Activated CD4-positive, alpha-beta T cell treated with anti-CD3 and anti-CD28 coated beads, Interleukin-2, amount 10 ng/mL, durations not matched to agents 24 days and 14 days (primary cell): ENCODE measurements at regions of chr18 and their contacts with region 1.

Region 1: GRCh38 chr18:24014062-24014985 is at the start of gene TTC39C:
- DNase-seq: peak; percentile 95
- H3K4me3 Mint-ChIP-seq: peak within 1 kb of the TSS; percentile 94
- H3K27ac Mint-ChIP-seq: peak within 1 kb of the TSS; percentile 93
- H3K4me1 Mint-ChIP-seq: peaks cover 74% of the 10 kb centered on the region
- H3K27me3 Mint-ChIP-seq: no peaks in the 10 kb centered on the region
- total RNA-seq, gene TTC39C: 28.8 and 29.2 TPM in 2 replicates

Region 2: DNA sequence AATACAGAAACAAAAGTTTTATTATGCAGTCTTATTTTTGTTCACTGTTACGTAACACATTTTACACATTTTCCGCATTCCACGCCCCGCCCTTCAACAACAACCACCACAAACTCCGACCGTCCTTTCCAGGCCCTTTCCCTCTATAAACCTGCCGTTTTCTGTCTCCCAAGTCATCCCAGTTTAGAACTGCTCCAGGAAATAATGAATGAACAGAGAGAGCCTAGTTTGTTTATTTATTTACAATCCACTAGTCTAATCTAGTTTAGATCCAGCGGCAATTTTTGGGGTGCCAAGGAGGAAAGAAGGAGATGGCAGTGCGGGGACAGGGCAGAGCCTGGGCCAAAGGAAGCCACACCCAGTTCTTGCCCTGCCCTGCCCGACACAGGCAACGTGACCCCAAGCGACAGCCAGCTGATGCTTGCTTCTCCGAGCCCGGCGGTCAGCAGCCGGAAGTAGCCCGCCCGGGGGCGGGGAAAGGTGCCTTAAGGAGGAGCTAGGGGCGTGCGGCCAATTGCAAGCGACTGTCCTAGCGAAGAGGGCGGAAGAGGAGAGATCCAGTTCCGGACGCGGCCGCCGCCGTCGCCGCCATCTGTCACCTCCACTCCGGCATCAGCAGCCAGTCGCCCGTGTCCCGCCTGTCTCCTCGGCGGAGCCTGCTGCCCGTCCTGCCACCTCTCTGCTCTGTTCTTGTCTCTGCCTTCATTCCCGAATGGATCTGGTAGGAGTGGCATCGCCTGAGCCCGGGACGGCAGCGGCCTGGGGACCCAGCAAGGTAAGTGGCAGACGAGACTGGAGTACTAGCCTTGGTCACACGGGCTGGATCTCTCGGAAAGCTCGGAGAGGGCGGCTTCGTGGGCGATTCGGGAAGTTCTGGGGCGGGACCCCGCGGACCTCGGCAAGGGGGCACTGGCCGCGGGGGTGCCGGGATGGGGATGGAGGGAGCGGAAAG is 561.3 kb before region 1 on chr18 and contains the start of gene RIOK3:
- intact Hi-C with region 1: loop called (anchors 10 kb)
- DNase-seq: peak; percentile 99
- H3K4me3 Mint-ChIP-seq: peak within 1 kb of the TSS; percentile 100
- H3K27ac Mint-ChIP-seq: peak within 1 kb of the TSS; percentile 95
- H3K4me1 Mint-ChIP-seq: peaks cover 38% of the 10 kb centered on the region
- H3K27me3 Mint-ChIP-seq: peaks cover 6% of the 10 kb centered on the region
- total RNA-seq, gene RIOK3: 46.7 and 53.3 TPM in 2 replicates

Region 3: DNA sequence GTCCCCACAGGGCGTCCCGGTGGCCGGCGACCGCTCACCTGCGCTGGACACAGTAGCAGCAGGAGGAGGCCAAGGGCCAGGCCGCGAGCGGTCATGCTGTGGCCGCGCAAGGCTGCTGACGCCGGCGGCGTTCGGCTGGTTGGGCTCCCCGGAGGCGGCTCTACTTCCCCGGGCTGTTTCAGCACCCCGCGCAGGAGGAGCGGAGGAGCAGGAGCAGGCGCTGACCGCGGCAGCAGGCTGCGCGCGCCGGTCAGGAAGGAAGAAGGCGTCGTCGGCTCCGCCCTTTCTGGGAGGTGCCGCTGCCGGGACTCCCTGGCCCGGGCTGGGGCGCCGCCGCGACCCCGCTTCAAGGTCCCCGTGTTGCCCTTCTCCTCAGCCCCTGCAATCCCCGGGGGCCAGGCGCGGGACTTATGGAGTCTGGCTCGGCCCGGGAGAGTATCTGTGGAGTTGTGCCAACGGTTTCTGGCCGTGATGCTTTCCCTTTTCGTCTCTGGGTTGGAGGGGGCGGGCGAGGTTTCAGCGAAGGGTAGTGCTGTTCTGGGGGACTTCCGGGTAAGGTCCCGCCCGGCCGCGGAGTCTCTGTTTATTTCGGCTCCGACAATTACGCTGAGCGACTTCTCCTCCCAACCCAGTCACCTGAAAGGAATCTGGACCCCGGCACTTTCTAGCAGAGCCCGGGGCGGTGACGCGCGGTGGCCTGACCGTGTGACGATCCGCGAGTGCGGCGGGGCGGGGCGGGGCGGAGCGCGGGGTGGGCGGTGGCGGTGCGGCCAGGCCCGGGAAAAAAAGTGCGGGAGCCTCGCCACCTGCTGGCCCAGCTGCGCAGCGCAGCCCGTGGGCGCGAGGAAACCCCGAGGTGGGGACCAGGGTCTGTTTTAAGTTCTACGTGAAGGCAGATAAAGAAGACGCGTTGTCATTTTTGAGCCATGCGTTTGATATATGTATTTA is 427.8 kb before region 1 on chr18 and contains the start of gene NPC1:
- intact Hi-C with region 1: loop called (anchors 5 kb)
- DNase-seq: peak; percentile 98
- H3K4me3 Mint-ChIP-seq: peak within 1 kb of the TSS; percentile 94
- H3K27ac Mint-ChIP-seq: peak within 1 kb of the TSS; percentile 96
- H3K4me1 Mint-ChIP-seq: peaks cover 37% of the 10 kb centered on the region
- H3K27me3 Mint-ChIP-seq: peaks cover 3% of the 10 kb centered on the region
- total RNA-seq, gene NPC1: 26.3 and 29.9 TPM in 2 replicates

Region 4: DNA sequence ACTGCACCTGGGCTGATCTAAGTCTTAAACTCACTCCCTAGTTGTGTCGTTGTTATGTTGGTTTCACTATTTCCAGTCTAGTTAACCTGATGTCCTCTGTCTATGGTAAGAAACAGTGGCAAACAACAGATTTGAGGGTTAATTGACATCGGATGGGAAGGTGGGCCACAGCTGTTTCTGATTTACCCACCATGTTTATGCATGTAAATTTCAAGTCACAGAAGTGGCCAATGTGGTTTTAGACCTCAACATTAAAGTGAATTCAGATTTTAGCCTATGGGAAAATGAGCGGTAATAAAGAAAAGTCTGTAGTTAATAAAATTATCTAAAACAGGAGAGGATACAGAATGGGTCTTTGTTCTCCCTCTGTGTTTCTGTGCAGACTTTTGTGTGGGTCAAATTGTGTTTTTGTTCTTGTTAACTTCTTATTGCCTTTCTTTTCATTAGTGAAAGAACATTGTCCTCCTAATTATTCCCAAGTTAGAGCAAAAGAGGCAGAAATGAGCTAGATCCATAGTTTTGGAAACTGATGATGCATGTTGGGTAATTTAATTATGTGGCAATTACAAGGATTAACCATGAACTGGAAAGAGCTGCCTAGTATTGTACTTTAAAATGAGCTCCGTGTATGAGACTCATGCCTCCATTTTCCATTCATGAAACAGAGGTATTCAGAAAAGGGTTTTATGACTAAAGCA is 241.8 kb before region 1 on chr18:
- intact Hi-C with region 1: no loop called
- DNase-seq: no peak
- H3K4me3 Mint-ChIP-seq: no peak overlapping the region
- H3K27ac Mint-ChIP-seq: no peak overlapping the region
- H3K4me1 Mint-ChIP-seq: no peaks in the 10 kb centered on the region
- H3K27me3 Mint-ChIP-seq: peaks cover 30% of the 10 kb centered on the region

Region 5: DNA sequence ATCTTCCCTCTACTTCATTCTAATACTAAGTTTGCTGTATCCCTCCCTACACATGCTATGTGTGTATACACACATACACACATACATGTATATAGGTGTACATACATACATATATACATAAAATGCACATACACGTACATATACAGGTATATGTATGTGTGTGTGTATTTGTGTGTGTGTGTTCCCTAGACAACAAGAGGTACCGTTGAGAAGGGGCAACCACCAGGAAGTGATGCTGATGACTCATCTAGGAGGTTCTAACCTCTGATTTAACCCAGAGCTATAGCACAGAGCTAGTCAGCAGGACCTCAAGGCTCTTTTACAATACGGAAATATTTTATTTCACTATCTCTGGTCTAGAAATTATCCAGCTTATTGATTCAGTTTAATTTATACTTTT is 185.9 kb before region 1 on chr18:
- intact Hi-C with region 1: loop called (anchors 5 kb)
- DNase-seq: peak; percentile 89
- H3K4me3 Mint-ChIP-seq: no peak overlapping the region
- H3K27ac Mint-ChIP-seq: peak overlapping the region; percentile 79
- H3K4me1 Mint-ChIP-seq: peaks cover 37% of the 10 kb centered on the region
- H3K27me3 Mint-ChIP-seq: peaks cover 3% of the 10 kb centered on the region

Region 6: GRCh38 chr18:23972416-23972815 is 41.9 kb before region 1 on chr18:
- intact Hi-C with region 1: loop called (anchors 2 kb)
- DNase-seq: peak; percentile 64
- H3K4me3 Mint-ChIP-seq: no peak overlapping the region
- H3K27ac Mint-ChIP-seq: no peak overlapping the region
- H3K4me1 Mint-ChIP-seq: peaks cover 26% of the 10 kb centered on the region
- H3K27me3 Mint-ChIP-seq: peaks cover 24% of the 10 kb centered on the region

Region 7: GRCh38 chr18:24075731-24076130 is 61.4 kb after region 1 on chr18:
- intact Hi-C with region 1: loop called (anchors 1 kb)
- DNase-seq: no peak
- H3K4me3 Mint-ChIP-seq: peak overlapping the region; percentile 51
- H3K27ac Mint-ChIP-seq: peak overlapping the region; percentile 85
- H3K4me1 Mint-ChIP-seq: peaks cover 25% of the 10 kb centered on the region
- H3K27me3 Mint-ChIP-seq: no peaks in the 10 kb centered on the region

Region 8: DNA sequence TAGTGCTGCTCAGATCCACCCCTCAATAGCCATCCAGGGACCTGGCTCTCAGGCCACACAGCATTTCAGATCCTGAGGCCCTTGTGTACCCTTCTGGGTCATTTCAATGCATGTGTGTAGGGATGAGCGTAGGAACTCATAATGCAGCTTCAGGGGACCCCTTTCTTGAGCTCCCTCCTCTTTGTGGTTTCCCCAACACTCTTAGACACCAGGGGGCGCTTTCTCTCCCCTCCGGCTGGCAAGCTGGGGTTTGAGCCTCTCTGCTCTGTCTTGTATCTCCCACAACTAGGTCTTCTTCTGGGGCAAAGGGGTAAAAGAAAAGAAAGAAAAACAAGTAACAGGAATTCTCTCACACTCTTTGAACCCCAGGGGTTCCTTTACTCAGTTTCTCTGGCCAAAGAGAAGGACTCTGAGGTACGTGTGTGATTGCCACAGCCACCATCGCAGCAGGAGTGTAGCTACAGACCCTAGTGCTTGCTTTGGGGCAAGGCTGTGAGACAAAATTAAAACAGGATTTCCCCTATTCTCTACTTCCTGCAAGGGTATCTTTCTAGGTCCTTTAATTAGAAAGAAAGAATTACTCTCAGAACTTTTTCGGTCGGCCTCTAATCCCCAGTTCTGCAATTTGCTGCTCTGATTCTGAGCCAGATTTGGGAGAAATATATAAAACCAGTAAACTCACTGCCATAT is 162.5 kb after region 1 on chr18:
- intact Hi-C with region 1: no loop called
- DNase-seq: peak; percentile 76
- H3K4me3 Mint-ChIP-seq: no peak overlapping the region
- H3K27ac Mint-ChIP-seq: no peak overlapping the region
- H3K4me1 Mint-ChIP-seq: peaks cover 8% of the 10 kb centered on the region
- H3K27me3 Mint-ChIP-seq: no peaks in the 10 kb centered on the region